ENCODE measurements at regions of chr3 and their contacts with region 1.

Region 1: DNA sequence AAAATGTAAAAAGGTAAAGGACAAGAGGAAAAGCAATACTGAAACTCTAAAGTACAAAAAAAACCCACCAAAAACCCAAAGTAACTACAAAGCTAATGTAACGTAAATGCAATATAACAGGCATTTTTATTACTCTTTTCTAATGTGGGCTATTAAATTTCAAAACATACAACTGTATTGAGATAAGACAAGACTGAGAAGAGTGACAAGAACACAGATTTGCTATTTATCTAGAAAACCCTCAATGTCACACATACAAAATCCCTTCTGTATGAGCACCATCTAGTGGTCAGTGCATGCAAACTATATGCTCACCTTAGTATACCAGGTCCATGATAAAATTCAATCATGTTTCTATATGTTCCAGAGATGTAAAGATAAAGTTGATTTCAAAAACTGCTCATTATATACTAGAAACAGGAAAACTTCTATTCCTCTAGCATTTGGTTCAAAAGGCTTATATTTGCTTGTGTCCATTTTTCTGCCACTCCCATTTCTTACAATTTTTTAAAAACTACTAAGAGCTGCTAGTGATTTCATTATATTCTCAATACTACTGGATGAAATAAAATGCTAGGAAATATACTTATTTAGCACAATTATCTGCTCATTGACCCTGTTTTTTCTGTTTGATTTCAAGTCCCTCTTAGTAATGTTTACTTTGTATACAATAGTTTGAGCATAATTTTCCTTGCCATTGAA is 111.4 kb downstream of the DLG1 start:
- DNase-seq: peak; percentile 40
- ATAC-seq: peak; percentile 97
- H3K4me3 ChIP-seq: no peak overlapping the region
- H3K27ac ChIP-seq: no peak overlapping the region; the same call in 1 of the 2 replicates
- H3K4me1 ChIP-seq: peaks cover 8% of the 10 kb centered on the region; the same call in 1 of the 2 replicates
- H3K27me3 ChIP-seq: no peaks in the 10 kb centered on the region
- CTCF ChIP-seq: peak; percentile 72 to 84 (median 82)
- EP300 ChIP-seq: no peak
- POLR2A ChIP-seq: no peak
- RAD21 ChIP-seq: peak; percentile 86

Region 2: GRCh38 chr3:196979545-196979944 is 207.5 kb before region 1 on chr3:
- CTCF ChIA-PET with region 1: interaction called, 41 read pairs
- POLR2A ChIA-PET with region 1: no interaction called
- RAD21 ChIA-PET with region 1: interaction called, 4 read pairs
- SMC1A ChIA-PET with region 1: interaction called, 12 read pairs
- in situ Hi-C with region 1: no loop called
- intact Hi-C with region 1: loop called (anchors 1 kb)
- DNase-seq: no peak
- ATAC-seq: no peak
- H3K4me3 ChIP-seq: no peak overlapping the region
- H3K27ac ChIP-seq: no peak overlapping the region
- H3K4me1 ChIP-seq: peaks cover 6% of the 10 kb centered on the region
- H3K27me3 ChIP-seq: no peaks in the 10 kb centered on the region
- CTCF ChIP-seq: no peak
- EP300 ChIP-seq: no peak
- POLR2A ChIP-seq: no peak
- RAD21 ChIP-seq: no peak

Region 3: GRCh38 chr3:197029511-197030167 is 157.4 kb before region 1 on chr3 and contains the start of gene MELTF:
- CTCF ChIA-PET with region 1: interaction called, 36 read pairs
- POLR2A ChIA-PET with region 1: no interaction called
- RAD21 ChIA-PET with region 1: interaction called, 6 read pairs
- SMC1A ChIA-PET with region 1: interaction called, 6 read pairs
- in situ Hi-C with region 1: no loop called
- intact Hi-C with region 1: no loop called
- DNase-seq: no peak
- ATAC-seq: peak; percentile 88
- H3K4me3 ChIP-seq: peak within 1 kb of the TSS; percentile 93
- H3K27ac ChIP-seq: peak within 1 kb of the TSS; percentile 83
- H3K4me1 ChIP-seq: no peaks in the 10 kb centered on the region; the same call in 1 of the 2 replicates
- H3K27me3 ChIP-seq: no peaks in the 10 kb centered on the region
- CTCF ChIP-seq: peak; percentile 65 to 90 (median 82)
- EP300 ChIP-seq: no peak
- POLR2A ChIP-seq: peak; percentile 86
- RAD21 ChIP-seq: peak; percentile 63
- polyA plus RNA-seq, gene MELTF: 0.55 to 1.3 TPM

Region 4: DNA sequence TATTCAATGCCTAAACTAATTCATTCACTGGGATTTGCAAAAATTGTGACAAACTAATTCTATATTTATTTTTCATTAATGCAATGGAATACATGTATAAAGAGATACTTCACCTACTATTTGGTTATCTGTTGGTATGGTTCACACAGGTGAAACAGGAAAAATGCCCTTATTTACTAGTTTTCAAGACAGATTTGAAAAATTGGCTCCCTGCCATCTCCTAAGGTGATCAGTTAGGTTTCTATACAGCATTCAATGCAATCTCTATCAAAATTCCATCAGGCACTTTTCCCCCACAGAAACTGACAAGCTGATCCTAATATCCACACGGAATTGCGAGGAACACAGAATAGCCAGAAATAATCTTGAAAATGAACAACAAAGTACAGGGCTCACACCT is 10.3 kb after region 1 on chr3:
- CTCF ChIA-PET with region 1: interaction called, 24 read pairs
- POLR2A ChIA-PET with region 1: no interaction called
- RAD21 ChIA-PET with region 1: interaction called, 4 read pairs
- SMC1A ChIA-PET with region 1: no interaction called
- in situ Hi-C with region 1: no loop called
- intact Hi-C with region 1: no loop called
- DNase-seq: no peak
- ATAC-seq: no peak
- H3K4me3 ChIP-seq: no peak overlapping the region
- H3K27ac ChIP-seq: no peak overlapping the region
- H3K4me1 ChIP-seq: no peaks in the 10 kb centered on the region
- H3K27me3 ChIP-seq: no peaks in the 10 kb centered on the region
- CTCF ChIP-seq: no peak
- EP300 ChIP-seq: no peak
- POLR2A ChIP-seq: no peak
- RAD21 ChIP-seq: no peak

Region 5: DNA sequence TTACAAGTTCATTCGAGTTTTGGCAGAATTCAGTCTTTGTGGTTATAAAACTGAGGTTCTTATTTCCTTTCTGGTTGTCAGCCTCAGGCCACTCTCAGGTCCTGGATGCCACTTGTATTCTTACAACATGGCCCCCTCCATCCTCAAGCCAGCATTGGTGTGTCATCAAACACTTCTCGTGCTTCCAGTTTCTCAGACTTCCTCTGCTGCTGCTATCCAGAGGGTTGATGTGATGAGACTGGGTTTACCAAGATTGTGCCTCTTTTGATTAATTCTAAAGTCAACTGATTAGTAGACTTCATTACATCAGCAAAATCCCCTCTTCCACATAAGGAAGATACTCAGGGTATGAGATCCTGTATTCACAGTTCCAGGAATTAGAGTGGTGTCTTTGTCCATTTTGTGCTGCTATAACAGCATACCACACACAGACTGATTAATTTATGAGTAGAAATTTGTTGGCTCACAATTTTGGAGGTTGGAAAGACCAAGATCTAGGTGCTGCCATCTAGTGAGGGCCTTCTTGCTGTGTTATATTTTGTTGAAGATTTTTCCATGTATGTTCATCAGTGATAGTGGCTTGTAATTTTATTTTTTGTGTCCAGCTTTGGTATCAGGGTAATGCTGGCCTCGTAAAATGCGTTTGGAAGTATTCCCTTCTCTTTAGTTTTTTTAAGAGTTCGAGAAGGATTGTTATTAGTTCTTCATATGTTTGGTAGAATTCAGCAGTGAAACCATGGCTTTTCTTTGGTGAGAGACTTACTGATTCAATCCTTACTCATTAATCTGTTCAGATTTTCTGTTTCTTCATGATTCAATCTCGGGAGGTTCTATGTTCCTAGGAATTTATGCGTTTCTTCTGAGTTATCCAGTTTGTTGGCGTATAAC is 615.1 kb after region 1 on chr3:
- CTCF ChIA-PET with region 1: no interaction called
- POLR2A ChIA-PET with region 1: no interaction called
- RAD21 ChIA-PET with region 1: no interaction called
- SMC1A ChIA-PET with region 1: no interaction called
- in situ Hi-C with region 1: no loop called
- intact Hi-C with region 1: no loop called
- DNase-seq: peak; percentile 40
- ATAC-seq: peak; percentile 68
- H3K4me3 ChIP-seq: peak overlapping the region; percentile 24; the same call in 1 of the 2 replicates
- H3K27ac ChIP-seq: peak overlapping the region; percentile 54
- H3K4me1 ChIP-seq: peaks cover 37% of the 10 kb centered on the region
- H3K27me3 ChIP-seq: no peaks in the 10 kb centered on the region
- CTCF ChIP-seq: peak; percentile 49 to 56 (median 51)
- EP300 ChIP-seq: no peak
- POLR2A ChIP-seq: no peak
- RAD21 ChIP-seq: peak; percentile 46